Sciatic nerve (tissue), 2 donors: ENCODE measurements at regions of chr12 and their contacts with region 1.

Region 1: GRCh38 chr12:125015680-125016310 is 22.4 kb downstream of the BRI3BP start:
- DNase-seq: no peak
- ATAC-seq: no peak

Region 2: DNA sequence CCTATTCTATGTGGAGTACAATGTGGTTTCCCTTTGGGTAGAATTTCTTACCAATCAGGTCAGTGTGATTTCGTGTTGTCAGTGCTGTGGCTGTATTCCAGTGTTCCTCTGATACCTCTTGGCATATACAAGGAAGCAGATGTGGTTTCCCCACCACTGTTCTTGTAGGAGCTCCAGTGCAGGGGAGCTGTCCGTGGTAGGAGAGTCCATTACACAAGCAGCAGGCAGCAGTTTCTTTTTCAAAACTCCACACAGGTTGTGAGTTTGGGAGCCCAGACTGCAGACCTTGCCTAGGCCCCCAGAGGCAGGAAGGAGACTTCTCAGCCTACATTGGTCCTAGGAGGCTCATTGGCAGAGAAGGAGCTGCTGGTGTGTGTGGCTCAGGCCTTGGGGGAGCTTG is 502.3 kb after region 1 on chr12:
- intact Hi-C with region 1: loop called (anchors 5 kb)
- DNase-seq: no peak
- ATAC-seq: no peak